ENCODE measurements at regions of chr15 and their contacts with region 1.

Region 1: DNA sequence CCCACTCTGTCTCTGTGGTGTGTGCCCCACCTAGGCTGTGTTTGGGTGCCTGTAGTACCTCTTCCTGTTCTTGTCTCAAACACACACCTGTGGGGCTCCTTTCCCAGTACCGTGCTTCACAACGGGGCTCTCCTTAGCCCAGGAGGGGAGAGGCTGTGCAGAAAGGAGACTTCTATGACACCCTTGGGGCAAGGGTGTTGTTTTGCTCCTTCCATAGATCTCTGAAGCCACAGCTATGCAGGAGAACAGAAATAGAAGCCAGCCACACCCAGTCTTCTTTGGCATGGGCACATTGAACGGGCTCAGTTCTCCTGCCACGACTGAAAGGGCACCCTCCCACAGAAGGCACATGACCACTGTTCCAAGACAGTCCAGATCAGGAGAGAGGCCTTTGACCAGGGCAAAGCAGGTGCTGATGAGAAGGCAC is 74.3 kb downstream of the LIPC start:
- DNase-seq: peak; percentile 43 to 75
- H3K4me3 ChIP-seq: no peak overlapping the region
- H3K27ac ChIP-seq: 0 out of 2 replicates have a peak overlapping the region, but pooled peaks have one; percentile 40
- H3K4me1 ChIP-seq: peaks cover 17% of the 10 kb centered on the region
- H3K27me3 ChIP-seq: no peaks in the 10 kb centered on the region
- CTCF ChIP-seq: no peak

Region 2: DNA sequence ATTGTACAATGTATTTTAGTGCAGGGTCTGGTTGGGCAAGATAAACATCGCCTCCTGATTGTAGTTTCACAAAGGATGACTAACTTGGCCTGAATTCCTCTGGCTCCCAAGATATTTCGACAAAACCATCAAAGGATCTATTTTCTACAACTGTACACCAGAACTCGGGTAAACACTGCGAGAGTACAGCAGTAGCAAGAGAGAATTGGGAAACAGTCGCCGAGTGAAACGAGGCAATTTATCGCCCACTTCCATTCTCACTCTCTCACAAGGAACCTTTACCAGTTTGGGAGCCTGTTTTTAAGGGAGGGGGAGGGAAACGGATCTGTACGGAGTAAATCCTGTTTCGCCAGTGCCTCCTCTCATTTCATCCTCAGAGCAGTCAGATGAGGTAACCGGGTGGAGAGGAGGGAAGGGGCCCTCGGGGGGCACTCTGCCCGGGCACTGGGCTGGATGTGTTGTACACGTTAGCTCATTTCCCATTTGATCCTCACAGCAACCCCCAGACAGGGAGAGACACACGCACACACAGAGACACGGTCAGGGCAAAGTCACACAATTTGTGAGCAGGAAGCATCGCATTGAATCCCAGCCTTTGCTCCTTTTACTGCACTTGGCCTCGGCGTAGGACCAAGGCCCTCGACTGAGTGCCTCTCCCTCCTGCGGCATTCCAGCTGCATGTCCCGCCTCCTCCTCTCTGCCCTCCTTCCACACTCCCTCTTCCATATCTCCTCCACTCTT is 45.9 kb after region 1 on chr15:
- CTCF ChIA-PET with region 1: no interaction called
- POLR2A ChIA-PET with region 1: interaction called, 24 read pairs
- intact Hi-C with region 1: loop called (anchors 1 kb)
- DNase-seq: peak; percentile 59 to 92
- H3K4me3 ChIP-seq: peak overlapping the region; percentile 44; the same call in 1 of the 2 replicates
- H3K27ac ChIP-seq: peak overlapping the region; percentile 97
- H3K4me1 ChIP-seq: peaks cover 55% of the 10 kb centered on the region
- H3K27me3 ChIP-seq: no peaks in the 10 kb centered on the region
- CTCF ChIP-seq: no peak

Region 3: GRCh38 chr15:58641660-58642059 is 135.6 kb after region 1 on chr15:
- CTCF ChIA-PET with region 1: no interaction called
- POLR2A ChIA-PET with region 1: no interaction called
- intact Hi-C with region 1: no loop called
- DNase-seq: no peak
- H3K4me3 ChIP-seq: no peak overlapping the region
- H3K27ac ChIP-seq: no peak overlapping the region
- H3K4me1 ChIP-seq: no peaks in the 10 kb centered on the region
- H3K27me3 ChIP-seq: no peaks in the 10 kb centered on the region
- CTCF ChIP-seq: no peak